ENCODE measurements at regions of chr16 and their contacts with region 1.

Region 1: GRCh38 chr16:67595033-67595355 is 32.7 kb downstream of the CTCF start:
- DNase-seq: no peak
- ATAC-seq: no peak
- H3K4me3 ChIP-seq: no peak overlapping the region
- H3K27ac ChIP-seq: no peak overlapping the region
- H3K4me1 ChIP-seq: no peaks in the 10 kb centered on the region
- H3K27me3 ChIP-seq: no peaks in the 10 kb centered on the region
- CTCF ChIP-seq: no peak

Region 2: DNA sequence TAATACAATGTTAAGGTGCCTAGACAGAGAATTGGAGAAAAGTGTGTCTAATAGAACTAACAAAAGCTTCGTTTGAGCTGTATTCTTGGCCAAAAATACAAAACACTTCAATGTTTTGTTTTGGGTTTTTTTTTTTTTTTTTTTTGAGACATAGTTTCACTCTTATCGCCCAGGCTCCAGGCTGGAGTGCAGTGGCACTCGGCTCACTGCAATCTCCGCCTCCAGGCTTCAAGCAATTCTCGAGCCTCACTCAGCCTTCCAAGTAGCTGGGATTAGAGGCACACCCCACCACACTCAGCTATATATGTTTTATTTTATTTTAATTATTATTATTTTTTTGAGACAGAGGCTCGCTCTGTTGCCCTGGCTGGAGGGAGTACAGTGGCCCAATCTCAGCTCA is 11.6 kb after region 1 on chr16:
- CTCF ChIA-PET with region 1: no interaction called
- POLR2A ChIA-PET with region 1: interaction called, 11 read pairs
- in situ Hi-C with region 1: no loop called
- intact Hi-C with region 1: no loop called
- DNase-seq: no peak
- ATAC-seq: no peak
- H3K4me3 ChIP-seq: no peak overlapping the region
- H3K27ac ChIP-seq: no peak overlapping the region
- H3K4me1 ChIP-seq: no peaks in the 10 kb centered on the region
- H3K27me3 ChIP-seq: no peaks in the 10 kb centered on the region
- CTCF ChIP-seq: no peak

Region 3: GRCh38 chr16:67685388-67686112 is 90.6 kb after region 1 on chr16:
- CTCF ChIA-PET with region 1: no interaction called
- POLR2A ChIA-PET with region 1: no interaction called
- in situ Hi-C with region 1: no loop called
- intact Hi-C with region 1: no loop called
- DNase-seq: no peak
- ATAC-seq: no peak
- H3K4me3 ChIP-seq: no peak overlapping the region
- H3K27ac ChIP-seq: no peak overlapping the region
- H3K4me1 ChIP-seq: no peaks in the 10 kb centered on the region
- H3K27me3 ChIP-seq: no peaks in the 10 kb centered on the region
- CTCF ChIP-seq: no peak

Region 4: GRCh38 chr16:67750466-67750865 is 155.5 kb after region 1 on chr16:
- CTCF ChIA-PET with region 1: no interaction called
- POLR2A ChIA-PET with region 1: no interaction called
- in situ Hi-C with region 1: no loop called
- intact Hi-C with region 1: no loop called
- DNase-seq: no peak
- ATAC-seq: no peak
- H3K4me3 ChIP-seq: no peak overlapping the region
- H3K27ac ChIP-seq: no peak overlapping the region
- H3K4me1 ChIP-seq: no peaks in the 10 kb centered on the region
- H3K27me3 ChIP-seq: no peaks in the 10 kb centered on the region
- CTCF ChIP-seq: no peak